Colonic mucosa (tissue), 4 donors: ENCODE measurements at regions of chr6 and their contacts with region 1.

Region 1: DNA sequence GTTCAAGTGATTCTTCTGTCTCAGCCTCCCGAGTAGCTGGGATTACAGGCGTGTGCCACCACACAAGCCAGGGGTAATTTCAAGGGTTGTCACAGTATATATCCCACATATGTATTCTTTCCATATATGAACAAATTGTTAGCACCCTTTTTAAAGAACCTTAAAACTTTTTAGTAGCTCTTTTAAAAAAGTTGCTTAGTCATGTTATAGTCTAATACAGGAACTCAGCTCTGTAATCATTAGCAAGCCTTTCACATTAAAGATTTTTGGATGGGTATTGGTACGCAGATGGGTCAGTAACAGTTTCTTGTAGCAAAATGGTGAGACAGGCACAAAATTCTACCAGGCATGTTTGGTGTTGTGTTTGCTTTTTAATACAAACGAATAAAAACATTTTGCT is 10.9 kb downstream of the AMD1 start:
- DNase-seq: no peak
- H3K4me3 ChIP-seq: no peak overlapping the region
- H3K27ac ChIP-seq: no peak overlapping the region
- H3K4me1 ChIP-seq: peaks cover 22% of the 10 kb centered on the region
- H3K27me3 ChIP-seq: no peaks in the 10 kb centered on the region
- CTCF ChIP-seq: no peak

Region 2: DNA sequence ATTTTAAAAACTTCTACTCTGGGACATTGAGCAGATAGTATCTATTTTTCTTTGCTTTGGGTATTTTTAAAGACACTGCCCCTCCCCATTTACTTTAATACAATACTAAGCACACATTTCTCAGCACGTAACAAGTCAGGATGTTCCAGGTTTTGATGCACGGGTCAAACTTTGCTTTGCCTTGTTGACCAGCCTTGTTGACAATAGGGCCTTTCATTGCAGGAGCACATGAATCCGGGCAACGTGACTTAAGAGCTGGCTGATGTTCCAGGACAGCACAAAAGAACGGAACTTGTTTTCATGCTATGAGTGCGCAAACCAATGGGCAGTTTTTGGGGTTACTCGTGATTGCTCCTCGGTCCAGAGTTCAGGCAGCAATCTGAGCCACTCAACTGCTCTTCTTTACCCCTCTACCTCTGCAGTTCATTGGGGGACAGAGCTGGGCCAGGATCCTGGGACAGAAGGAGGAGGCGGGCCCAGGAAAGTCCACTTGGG is 330.5 kb before region 1 on chr6:
- intact Hi-C with region 1: no loop called
- DNase-seq: no peak
- H3K4me3 ChIP-seq: no peak overlapping the region
- H3K27ac ChIP-seq: no peak overlapping the region
- H3K4me1 ChIP-seq: no peaks in the 10 kb centered on the region
- H3K27me3 ChIP-seq: no peaks in the 10 kb centered on the region
- CTCF ChIP-seq: no peak

Region 3: GRCh38 chr6:110944681-110945151 is 59.2 kb after region 1 on chr6:
- intact Hi-C with region 1: loop called (anchors 5 kb)
- DNase-seq: no peak
- H3K4me3 ChIP-seq: no peak overlapping the region
- H3K27ac ChIP-seq: no peak overlapping the region
- H3K4me1 ChIP-seq: no peaks in the 10 kb centered on the region
- H3K27me3 ChIP-seq: no peaks in the 10 kb centered on the region
- CTCF ChIP-seq: no peak